Heart left ventricle (tissue), 16 donors: ENCODE measurements at regions of chr6 and their contacts with region 1.

Region 1: DNA sequence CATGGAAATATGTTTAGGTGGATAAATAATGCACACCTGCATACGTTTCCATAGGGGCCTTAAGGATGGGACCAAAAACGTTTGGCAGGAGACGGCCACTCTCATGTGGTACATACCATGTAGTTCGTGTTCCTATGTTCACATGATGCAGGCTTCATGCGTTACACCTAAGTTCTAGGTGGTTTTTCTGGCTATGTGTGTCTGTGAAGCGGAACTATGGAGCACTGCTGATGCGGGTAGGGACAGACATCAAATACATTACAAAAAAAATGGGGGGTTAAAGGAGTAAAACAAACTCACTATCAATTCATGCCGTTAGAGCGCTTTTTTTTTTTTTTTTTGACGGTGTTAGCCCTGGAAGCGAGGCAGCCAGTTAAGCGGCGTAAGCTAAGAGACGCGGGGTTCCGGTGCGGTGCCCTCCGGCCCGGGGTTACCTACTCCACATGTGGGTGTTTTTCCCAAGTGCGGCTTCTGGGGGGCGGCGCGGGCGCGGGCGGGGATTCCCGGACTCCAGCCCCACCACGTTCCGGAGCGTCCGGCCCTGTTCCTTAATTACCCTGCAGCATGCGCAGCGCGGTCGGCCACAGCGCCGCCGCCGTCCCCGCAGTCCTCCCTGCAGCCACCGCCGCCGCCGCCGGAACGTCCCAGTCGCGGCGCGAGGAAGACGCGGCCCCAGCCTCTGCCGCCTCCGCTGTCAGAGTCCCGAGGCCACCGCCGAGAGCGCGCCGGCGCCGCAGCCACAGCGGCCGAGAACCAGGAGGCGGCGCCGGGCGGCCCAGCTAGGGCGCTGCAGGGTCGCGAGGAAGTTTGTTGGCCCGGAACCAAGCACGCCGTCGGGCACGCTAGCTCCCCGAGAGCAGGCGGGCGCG is 648 bp downstream of the COL19A1 start:
- DNase-seq: peak; percentile 52 to 83 (median 65)
- ATAC-seq: peak; percentile 59 to 94 (median 86)
- H3K4me3 ChIP-seq: peak overlapping the region; percentile 28 to 84 (median 63)
- H3K27ac ChIP-seq: peak overlapping the region in 10 of 12 donors; percentile 1 to 74 (median 59)
- H3K4me1 ChIP-seq: peaks cover 0 to 17% (median 2%) of the 10 kb centered on the region in 12 donors
- H3K27me3 ChIP-seq: peaks cover 0 to 33% (median 0%) of the 10 kb centered on the region in 9 donors
- CTCF ChIP-seq: peak in 8 of 12 donors; percentile 6 to 50 (median 26)
- POLR2A ChIP-seq: no peak

Region 2: DNA sequence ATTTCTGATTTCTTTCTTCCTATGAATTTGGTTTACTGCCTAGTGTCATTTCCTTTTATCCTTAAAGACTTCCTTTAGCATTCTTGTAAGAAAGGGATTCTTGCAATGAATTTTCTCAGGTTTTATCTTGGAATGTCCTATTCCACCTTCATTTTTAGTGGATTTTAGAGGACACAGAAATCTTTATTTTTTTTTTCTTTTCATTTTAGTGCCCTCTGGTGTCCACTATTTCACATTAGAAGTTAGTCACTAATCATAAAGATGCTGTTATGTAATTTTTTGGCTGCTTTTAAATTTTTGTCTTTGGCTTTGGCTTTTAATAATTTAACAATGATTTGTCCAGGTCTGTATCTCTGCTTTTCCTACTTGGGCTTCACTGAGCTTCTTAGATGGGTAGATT is 98.3 kb before region 1 on chr6:
- intact Hi-C with region 1: no loop called
- DNase-seq: no peak
- ATAC-seq: no peak
- H3K4me3 ChIP-seq: no peak overlapping the region
- H3K27ac ChIP-seq: no peak overlapping the region
- H3K4me1 ChIP-seq: no peaks in the 10 kb centered on the region
- H3K27me3 ChIP-seq: no peaks in the 10 kb centered on the region
- CTCF ChIP-seq: peak in 2 of 12 donors; percentile 10 to 14
- POLR2A ChIP-seq: no peak

Region 3: DNA sequence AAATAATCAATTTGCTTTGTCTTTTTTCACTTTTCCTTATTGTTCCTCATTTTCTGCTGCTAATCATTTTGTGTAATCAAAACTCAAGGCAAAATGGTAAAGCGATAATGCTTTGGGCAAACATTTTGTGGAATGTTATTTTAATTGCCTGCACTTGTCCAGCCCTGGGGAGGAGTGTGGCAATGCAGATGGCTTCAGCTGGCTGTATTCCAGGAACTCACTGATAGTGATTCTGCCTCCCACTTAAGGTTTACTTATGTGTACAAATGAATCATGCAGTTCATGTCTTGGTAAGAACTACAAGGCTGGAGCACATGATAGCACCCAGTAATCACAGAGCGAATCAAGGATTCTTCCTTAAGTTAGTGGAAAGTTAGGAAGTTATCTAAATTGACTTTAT is 107.2 kb after region 1 on chr6:
- intact Hi-C with region 1: loop called in 1 of 10 experiments (anchors 5 kb)
- DNase-seq: peak in 4 of 5 donors; percentile 15 to 33 (median 22)
- ATAC-seq: peak in 3 of 4 donors; percentile 80 to 88 (median 87)
- H3K4me3 ChIP-seq: no peak overlapping the region
- H3K27ac ChIP-seq: no peak overlapping the region
- H3K4me1 ChIP-seq: peaks cover 0 to 6% (median 0%) of the 10 kb centered on the region in 12 donors
- H3K27me3 ChIP-seq: no peaks in the 10 kb centered on the region
- CTCF ChIP-seq: no peak
- POLR2A ChIP-seq: no peak